Caco-2 (cell line): ENCODE measurements at regions of chr1 and their contacts with region 1.

Region 1: DNA sequence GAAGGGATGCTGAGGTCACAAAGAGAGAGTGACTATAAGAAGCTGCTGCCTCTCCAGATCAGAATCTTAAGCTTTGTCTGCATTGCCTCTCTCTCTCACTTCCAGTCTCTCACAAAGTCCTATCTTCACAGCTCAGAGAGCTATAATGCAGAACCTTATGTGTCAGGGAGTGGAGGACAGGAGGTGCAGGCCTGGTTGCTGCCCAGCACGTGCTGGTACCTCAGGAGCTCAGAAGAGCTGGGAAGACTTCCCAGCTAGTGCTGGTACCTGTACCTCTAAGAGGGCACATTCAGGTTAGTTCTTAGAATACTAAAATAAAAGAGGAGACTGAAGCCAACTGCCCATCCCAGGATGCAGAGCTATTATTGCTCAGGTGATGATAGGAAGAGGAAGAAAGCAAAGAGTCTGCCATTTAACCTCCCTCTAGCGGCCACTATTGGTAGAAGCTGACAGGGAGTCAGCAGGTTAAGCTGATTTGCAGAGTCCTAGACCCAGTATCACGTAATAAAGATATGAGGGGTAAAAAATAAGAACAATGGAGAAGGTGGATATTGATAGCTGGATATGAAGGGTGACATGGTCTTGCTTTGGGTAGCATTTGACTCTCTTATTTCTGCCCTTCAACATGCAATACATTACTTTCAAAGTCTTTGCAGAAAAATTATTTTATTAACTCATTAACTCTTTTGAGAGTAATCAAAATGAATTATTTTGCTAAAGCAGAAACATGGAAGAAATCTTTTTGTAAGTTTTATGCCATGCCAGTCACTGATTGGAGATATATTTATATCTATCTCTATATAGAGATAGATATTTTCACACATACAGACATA is 138.1 kb upstream of the HMCN1 start:
- DNase-seq: peak; percentile 50 to 58
- H3K4me3 ChIP-seq: no peak overlapping the region
- H3K4me3 Mint-ChIP-seq: no peak overlapping the region
- H3K27ac Mint-ChIP-seq: no peak overlapping the region
- H3K4me1 ChIP-seq: peaks cover 13% of the 10 kb centered on the region
- H3K4me1 Mint-ChIP-seq: peaks cover 18% of the 10 kb centered on the region
- H3K27me3 ChIP-seq: no peaks in the 10 kb centered on the region
- H3K27me3 Mint-ChIP-seq: no peaks in the 10 kb centered on the region
- CTCF ChIP-seq: peak; percentile 46 to 56

Region 2: GRCh38 chr1:185646202-185646683 is 50.2 kb after region 1 on chr1:
- CTCF ChIA-PET with region 1: interaction called, 5 read pairs
- POLR2A ChIA-PET with region 1: no interaction called
- intact Hi-C with region 1: loop called (anchors 2 kb)
- DNase-seq: peak; percentile 82 to 90
- H3K4me3 ChIP-seq: no peak overlapping the region
- H3K4me3 Mint-ChIP-seq: peak overlapping the region; percentile 48
- H3K27ac Mint-ChIP-seq: peak overlapping the region; percentile 86
- H3K4me1 ChIP-seq: peaks cover 37% of the 10 kb centered on the region
- H3K4me1 Mint-ChIP-seq: peaks cover 25% of the 10 kb centered on the region
- H3K27me3 ChIP-seq: no peaks in the 10 kb centered on the region
- H3K27me3 Mint-ChIP-seq: no peaks in the 10 kb centered on the region
- CTCF ChIP-seq: no peak